CD8-positive, alpha-beta T cell (primary cell): ENCODE measurements at regions of chr2 and their contacts with region 1.

Region 1: GRCh38 chr2:37414470-37414949 is 70.1 kb downstream of the QPCT start:
- DNase-seq: peak in 2 of 9 experiments; percentile 60 to 69
- ATAC-seq: peak; percentile 57
- H3K4me3 ChIP-seq: no peak overlapping the region
- H3K4me3 Mint-ChIP-seq: no peak overlapping the region
- H3K27ac ChIP-seq: no peak overlapping the region
- H3K27ac Mint-ChIP-seq: no peak overlapping the region
- H3K4me1 ChIP-seq: no peaks in the 10 kb centered on the region
- H3K4me1 Mint-ChIP-seq: peaks cover 15% of the 10 kb centered on the region
- H3K27me3 ChIP-seq: no peaks in the 10 kb centered on the region
- H3K27me3 Mint-ChIP-seq: peaks cover 3% of the 10 kb centered on the region
- CTCF ChIP-seq: peak; percentile 94

Region 2: GRCh38 chr2:37263839-37264238 is 150.7 kb before region 1 on chr2:
- CTCF ChIA-PET with region 1: no interaction called
- POLR2A ChIA-PET with region 1: no interaction called
- intact Hi-C with region 1: no loop called
- DNase-seq: no peak
- ATAC-seq: no peak
- H3K4me3 ChIP-seq: no peak overlapping the region
- H3K4me3 Mint-ChIP-seq: no peak overlapping the region
- H3K27ac ChIP-seq: no peak overlapping the region
- H3K27ac Mint-ChIP-seq: no peak overlapping the region
- H3K4me1 ChIP-seq: no peaks in the 10 kb centered on the region
- H3K4me1 Mint-ChIP-seq: peaks cover 3% of the 10 kb centered on the region
- H3K27me3 ChIP-seq: no peaks in the 10 kb centered on the region
- H3K27me3 Mint-ChIP-seq: no peaks in the 10 kb centered on the region
- CTCF ChIP-seq: no peak

Region 3: DNA sequence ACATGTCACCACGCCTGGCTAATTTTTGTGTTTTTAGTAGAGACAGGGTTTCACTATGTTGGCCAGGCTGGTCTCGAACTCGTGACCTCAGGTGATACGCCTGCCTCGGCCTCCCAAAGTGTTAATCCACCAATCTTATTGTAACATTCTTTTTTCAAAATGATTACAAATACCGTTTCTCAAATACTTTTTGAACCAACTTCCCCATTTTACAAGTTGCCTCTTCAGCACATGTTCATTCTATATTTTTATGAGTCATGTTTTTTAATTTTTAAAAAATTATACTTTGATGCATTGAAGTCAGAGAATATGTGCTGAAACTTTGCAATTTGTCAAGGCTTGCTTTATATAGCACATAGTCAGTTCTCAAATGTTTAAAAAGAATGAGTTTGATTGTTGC is 11.9 kb before region 1 on chr2:
- CTCF ChIA-PET with region 1: interaction called, 79 read pairs
- POLR2A ChIA-PET with region 1: no interaction called
- intact Hi-C with region 1: no loop called
- DNase-seq: no peak
- ATAC-seq: no peak
- H3K4me3 ChIP-seq: no peak overlapping the region
- H3K4me3 Mint-ChIP-seq: no peak overlapping the region
- H3K27ac ChIP-seq: no peak overlapping the region
- H3K27ac Mint-ChIP-seq: no peak overlapping the region
- H3K4me1 ChIP-seq: no peaks in the 10 kb centered on the region
- H3K4me1 Mint-ChIP-seq: no peaks in the 10 kb centered on the region
- H3K27me3 ChIP-seq: no peaks in the 10 kb centered on the region
- H3K27me3 Mint-ChIP-seq: no peaks in the 10 kb centered on the region
- CTCF ChIP-seq: no peak

Region 4: DNA sequence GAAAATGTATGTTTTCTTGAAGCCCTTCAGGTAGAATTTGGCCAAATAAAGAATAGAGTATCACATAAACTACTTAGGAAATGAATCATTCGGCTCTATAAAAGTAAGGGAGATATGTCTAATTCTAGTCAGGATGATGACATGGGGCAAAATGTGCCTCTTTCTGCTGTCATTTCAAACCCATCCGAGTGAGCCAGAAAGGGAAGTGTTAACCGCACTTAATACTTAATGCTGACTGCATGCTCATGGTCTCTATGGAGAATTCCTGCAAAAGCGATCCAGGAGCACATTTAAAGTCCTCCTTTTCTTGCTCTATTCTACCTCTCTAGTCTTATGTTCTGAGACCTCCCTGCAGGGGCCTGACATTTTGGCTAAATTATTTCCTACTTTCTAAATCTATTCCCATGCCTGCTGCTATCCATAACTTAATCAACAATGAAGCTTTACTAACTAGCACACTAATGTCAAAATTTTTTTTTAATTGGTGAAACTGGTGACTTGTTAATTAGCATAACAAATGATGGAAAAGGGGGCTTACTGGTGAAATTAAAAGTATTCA is 129.6 kb after region 1 on chr2:
- CTCF ChIA-PET with region 1: interaction called, 29 read pairs
- POLR2A ChIA-PET with region 1: interaction called, 3 read pairs
- intact Hi-C with region 1: loop called in 1 of 2 experiments (anchors 10 kb)
- DNase-seq: no peak
- ATAC-seq: no peak
- H3K4me3 ChIP-seq: no peak overlapping the region
- H3K4me3 Mint-ChIP-seq: no peak overlapping the region
- H3K27ac ChIP-seq: no peak overlapping the region
- H3K27ac Mint-ChIP-seq: no peak overlapping the region
- H3K4me1 ChIP-seq: no peaks in the 10 kb centered on the region
- H3K4me1 Mint-ChIP-seq: peaks cover 4% of the 10 kb centered on the region
- H3K27me3 ChIP-seq: no peaks in the 10 kb centered on the region
- H3K27me3 Mint-ChIP-seq: no peaks in the 10 kb centered on the region
- CTCF ChIP-seq: no peak

Region 5: DNA sequence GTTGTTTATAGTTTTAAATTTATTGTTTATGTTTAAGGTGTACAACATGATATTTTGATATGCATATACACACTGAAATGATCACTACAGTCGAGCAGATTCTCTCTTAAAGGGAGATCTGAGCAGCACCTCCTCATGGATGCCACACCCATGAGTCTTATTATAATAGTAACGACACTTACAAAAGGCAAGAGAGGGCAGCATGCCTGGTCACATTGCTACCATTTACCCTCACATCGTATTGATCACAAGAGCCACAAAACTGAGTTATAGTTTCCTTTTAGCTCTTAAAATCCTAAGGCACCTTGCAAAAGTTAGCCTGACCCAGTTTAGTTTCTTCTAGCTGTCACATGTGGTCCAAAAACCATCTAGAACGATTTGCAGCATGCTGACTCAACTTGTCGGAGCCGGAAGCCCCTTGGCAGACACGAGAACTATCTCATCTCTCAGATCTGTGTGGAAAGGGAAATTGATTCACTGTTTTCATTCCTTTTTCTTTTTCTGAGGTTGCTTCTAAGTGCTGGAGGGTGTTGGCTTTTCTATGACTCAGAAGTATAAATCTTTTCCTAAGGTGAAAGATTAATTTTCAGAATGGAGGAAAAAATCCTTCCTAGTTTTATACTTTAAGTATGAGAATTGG is 171.6 kb after region 1 on chr2:
- CTCF ChIA-PET with region 1: interaction called, 15 read pairs
- POLR2A ChIA-PET with region 1: no interaction called
- intact Hi-C with region 1: no loop called
- DNase-seq: peak; percentile 37 to 91 (median 75)
- ATAC-seq: peak; percentile 85
- H3K4me3 ChIP-seq: no peak overlapping the region
- H3K4me3 Mint-ChIP-seq: peak overlapping the region; percentile 42
- H3K27ac ChIP-seq: peak overlapping the region; percentile 2 to 83
- H3K27ac Mint-ChIP-seq: peak overlapping the region; percentile 88
- H3K4me1 ChIP-seq: peaks cover 61% of the 10 kb centered on the region
- H3K4me1 Mint-ChIP-seq: peaks cover 87% of the 10 kb centered on the region
- H3K27me3 ChIP-seq: no peaks in the 10 kb centered on the region
- H3K27me3 Mint-ChIP-seq: no peaks in the 10 kb centered on the region
- CTCF ChIP-seq: no peak

Region 6: DNA sequence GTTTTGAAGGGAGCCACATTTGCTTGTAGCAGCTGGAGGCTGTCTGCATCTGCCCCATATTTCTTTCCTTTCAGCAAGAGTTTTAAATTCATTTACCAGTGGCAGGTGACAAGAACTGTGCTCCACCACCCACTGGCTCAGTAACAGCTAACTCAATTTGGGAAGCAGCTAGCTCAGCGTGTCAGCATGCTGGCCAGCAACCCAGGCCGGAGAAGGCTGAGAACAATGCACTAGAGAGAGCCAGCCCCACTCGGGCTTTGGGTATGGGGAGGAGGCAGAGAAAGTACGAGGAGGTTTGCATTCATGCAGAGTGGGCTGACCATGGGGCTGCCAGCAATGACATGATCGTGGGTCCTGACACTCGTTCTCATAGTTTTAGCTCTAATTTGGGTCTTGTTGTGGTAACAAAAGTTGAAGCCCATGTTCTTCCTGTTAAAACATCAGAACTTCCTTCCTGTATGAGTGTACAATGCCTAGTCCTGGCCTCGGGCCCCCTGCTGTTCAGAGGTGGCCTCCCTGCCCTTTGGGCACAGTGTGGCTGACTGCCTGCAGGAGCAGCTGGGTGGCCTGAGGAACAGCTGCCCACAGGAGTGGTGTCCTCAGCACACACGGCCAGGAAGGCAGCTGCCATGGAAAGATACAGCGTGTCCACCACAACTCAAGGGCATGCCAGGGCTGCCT is 234.0 kb after region 1 on chr2:
- CTCF ChIA-PET with region 1: interaction called, 19 read pairs
- POLR2A ChIA-PET with region 1: interaction called, 4 read pairs
- intact Hi-C with region 1: loop called in 1 of 2 experiments (anchors 10 kb)
- DNase-seq: peak in 8 of 9 experiments; percentile 8 to 80 (median 57)
- ATAC-seq: peak; percentile 71
- H3K4me3 ChIP-seq: peak overlapping the region in 1 of 2 experiments; percentile 24
- H3K4me3 Mint-ChIP-seq: peak overlapping the region; percentile 65
- H3K27ac ChIP-seq: peak overlapping the region in 1 of 2 experiments; percentile 68
- H3K27ac Mint-ChIP-seq: peak overlapping the region; percentile 92
- H3K4me1 ChIP-seq: peaks cover 84% of the 10 kb centered on the region
- H3K4me1 Mint-ChIP-seq: peaks cover 92% of the 10 kb centered on the region
- H3K27me3 ChIP-seq: no peaks in the 10 kb centered on the region
- H3K27me3 Mint-ChIP-seq: no peaks in the 10 kb centered on the region
- CTCF ChIP-seq: peak; percentile 24

Region 7: GRCh38 chr2:37809525-37809924 is 395.0 kb after region 1 on chr2:
- CTCF ChIA-PET with region 1: interaction called, 8 read pairs
- POLR2A ChIA-PET with region 1: no interaction called
- intact Hi-C with region 1: loop called in 1 of 2 experiments (anchors 1 kb)
- DNase-seq: peak in 2 of 9 experiments; percentile 27 to 31
- ATAC-seq: no peak
- H3K4me3 ChIP-seq: no peak overlapping the region
- H3K4me3 Mint-ChIP-seq: no peak overlapping the region
- H3K27ac ChIP-seq: no peak overlapping the region
- H3K27ac Mint-ChIP-seq: no peak overlapping the region
- H3K4me1 ChIP-seq: no peaks in the 10 kb centered on the region
- H3K4me1 Mint-ChIP-seq: peaks cover 3% of the 10 kb centered on the region
- H3K27me3 ChIP-seq: no peaks in the 10 kb centered on the region
- H3K27me3 Mint-ChIP-seq: no peaks in the 10 kb centered on the region
- CTCF ChIP-seq: peak; percentile 29

Region 8: DNA sequence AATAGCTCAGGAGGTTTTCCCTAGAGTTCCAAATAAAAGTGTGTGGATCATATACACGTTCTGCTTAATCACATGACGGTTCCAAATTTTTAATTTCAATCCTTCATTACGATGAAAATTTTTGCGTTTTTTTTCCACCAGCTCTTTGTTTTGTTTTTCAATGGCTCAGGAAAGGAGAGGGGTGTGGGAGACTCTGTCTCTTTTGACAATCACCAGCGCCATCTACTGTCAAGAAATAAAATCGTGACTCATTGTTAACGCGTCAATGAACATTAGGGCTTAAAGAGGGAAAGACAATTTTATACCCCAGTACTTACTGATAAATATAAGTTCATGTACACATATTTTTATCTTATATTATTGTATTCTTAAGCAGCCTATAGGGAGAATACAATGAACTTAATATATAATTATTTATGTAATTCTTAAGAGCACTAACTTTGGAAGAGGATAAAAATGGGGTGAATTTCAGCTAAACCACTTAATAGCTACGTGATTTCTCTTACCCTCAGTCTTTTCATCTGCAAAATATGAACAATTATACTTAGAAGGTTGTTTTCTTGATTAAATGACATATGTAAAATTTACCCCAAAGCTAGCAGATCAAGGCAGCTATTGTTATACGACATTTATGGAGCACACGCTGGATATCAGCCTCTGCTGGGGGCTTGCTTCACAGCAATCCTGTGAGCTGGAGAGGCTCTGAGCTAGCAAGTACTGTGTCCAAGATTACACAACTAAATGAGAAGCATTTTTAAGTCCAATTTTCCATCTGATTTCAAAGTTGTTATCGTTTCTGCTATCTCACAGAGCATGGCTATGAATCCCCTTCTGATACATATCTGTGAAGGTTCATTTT is 463.2 kb after region 1 on chr2:
- CTCF ChIA-PET with region 1: interaction called, 43 read pairs
- POLR2A ChIA-PET with region 1: no interaction called
- intact Hi-C with region 1: loop called (anchors 1 kb)
- DNase-seq: peak in 3 of 9 experiments; percentile 39 to 76 (median 67)
- ATAC-seq: peak; percentile 63
- H3K4me3 ChIP-seq: no peak overlapping the region
- H3K4me3 Mint-ChIP-seq: no peak overlapping the region
- H3K27ac ChIP-seq: no peak overlapping the region
- H3K27ac Mint-ChIP-seq: no peak overlapping the region
- H3K4me1 ChIP-seq: no peaks in the 10 kb centered on the region
- H3K4me1 Mint-ChIP-seq: peaks cover 2% of the 10 kb centered on the region
- H3K27me3 ChIP-seq: no peaks in the 10 kb centered on the region
- H3K27me3 Mint-ChIP-seq: peaks cover 21% of the 10 kb centered on the region
- CTCF ChIP-seq: peak; percentile 82

Region 9: DNA sequence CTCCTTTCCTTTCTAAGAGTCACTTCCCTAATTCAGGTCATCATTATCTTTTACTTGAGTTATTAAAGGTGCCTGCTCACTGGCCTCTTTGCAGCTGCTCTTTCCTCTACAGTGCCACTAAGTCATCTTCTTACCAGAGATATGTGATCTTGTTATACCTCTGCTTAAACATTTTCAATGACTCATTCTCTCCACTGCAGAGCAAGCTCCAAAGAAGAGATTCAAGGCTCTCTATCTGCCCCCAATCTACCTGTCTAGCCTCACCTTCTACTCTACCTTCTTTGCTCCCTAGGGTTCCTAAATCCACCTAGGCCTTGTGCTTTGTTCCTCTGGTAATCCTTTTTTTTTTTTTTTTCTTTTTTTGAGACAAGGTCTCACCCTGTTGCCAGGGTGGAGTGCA is 1478.3 kb after region 1 on chr2:
- CTCF ChIA-PET with region 1: no interaction called
- POLR2A ChIA-PET with region 1: no interaction called
- intact Hi-C with region 1: no loop called
- DNase-seq: no peak
- ATAC-seq: no peak
- H3K4me3 ChIP-seq: no peak overlapping the region
- H3K4me3 Mint-ChIP-seq: no peak overlapping the region
- H3K27ac ChIP-seq: no peak overlapping the region
- H3K27ac Mint-ChIP-seq: no peak overlapping the region
- H3K4me1 ChIP-seq: no peaks in the 10 kb centered on the region
- H3K4me1 Mint-ChIP-seq: no peaks in the 10 kb centered on the region
- H3K27me3 ChIP-seq: no peaks in the 10 kb centered on the region
- H3K27me3 Mint-ChIP-seq: peaks cover 3% of the 10 kb centered on the region
- CTCF ChIP-seq: no peak